ENCODE measurements at regions of chr2 and their contacts with region 1.

Region 1: DNA sequence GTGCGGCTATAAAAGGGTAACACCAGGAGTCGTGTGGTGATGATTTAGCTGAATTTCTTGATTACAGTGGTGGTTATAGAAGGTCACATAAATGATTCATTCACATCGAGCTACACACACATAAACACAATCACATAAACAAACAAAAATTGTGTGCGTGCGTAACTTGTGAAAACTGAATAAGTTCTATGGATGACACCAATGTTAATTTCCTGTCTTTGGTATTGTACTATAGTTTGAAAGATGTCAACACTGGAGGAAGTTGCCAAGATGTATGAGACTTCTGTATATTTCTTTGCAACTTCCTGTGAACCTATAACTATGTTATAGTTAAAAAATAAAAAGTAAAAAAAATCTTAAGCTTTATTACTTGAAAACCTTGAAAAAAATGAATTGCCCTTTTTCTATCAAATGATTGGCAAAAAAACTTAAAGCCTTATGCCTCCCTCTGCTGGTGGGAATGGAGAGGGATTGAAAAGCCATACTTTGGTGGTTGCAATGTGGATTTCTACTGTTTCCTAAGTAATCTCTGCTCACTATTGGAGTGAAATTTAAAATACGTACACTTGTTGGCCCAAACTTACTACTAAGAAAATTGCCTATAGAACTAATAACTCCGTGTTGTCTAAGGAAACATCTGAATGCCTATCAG is 227.7 kb downstream of the RPIA start:
- DNase-seq: peak; percentile 51
- ATAC-seq: peak; percentile 37; the same call in 1 of the 2 replicates
- H3K4me3 ChIP-seq: no peak overlapping the region
- H3K27ac ChIP-seq: no peak overlapping the region
- H3K4me1 ChIP-seq: no peaks in the 10 kb centered on the region
- H3K27me3 ChIP-seq: peaks cover 44% of the 10 kb centered on the region
- CTCF ChIP-seq: peak; percentile 74

Region 2: DNA sequence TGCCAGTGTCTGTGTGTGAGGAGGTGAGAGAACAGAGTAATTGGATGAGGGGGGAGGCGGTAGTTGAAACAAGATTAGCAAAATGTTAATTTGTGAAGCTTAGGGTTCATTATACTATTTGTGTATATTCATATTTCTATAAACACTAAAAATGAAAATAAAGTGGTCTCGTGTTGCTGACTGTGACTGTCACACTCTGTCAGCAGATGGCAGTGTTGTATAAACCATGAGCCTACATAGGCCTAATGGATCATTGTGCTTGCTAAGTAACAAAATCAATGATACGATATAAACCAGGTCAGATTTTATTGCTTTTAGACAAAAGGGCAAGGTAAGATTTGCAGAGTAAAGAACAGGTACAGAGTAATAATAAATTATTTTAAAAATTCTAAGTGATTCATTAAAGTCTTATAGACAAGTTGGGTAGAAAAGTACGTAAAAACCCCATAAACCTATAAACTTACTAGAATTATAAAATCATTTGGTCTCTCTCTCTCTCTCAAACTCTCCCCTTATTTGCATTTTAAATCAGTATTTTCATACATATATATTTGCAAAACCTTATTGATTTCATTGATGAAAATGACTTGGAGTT is 45.1 kb before region 1 on chr2:
- CTCF ChIA-PET with region 1: no interaction called
- POLR2A ChIA-PET with region 1: no interaction called
- intact Hi-C with region 1: loop called (anchors 1 kb)
- DNase-seq: peak; percentile 76
- ATAC-seq: peak; percentile 85
- H3K4me3 ChIP-seq: no peak overlapping the region
- H3K27ac ChIP-seq: no peak overlapping the region
- H3K4me1 ChIP-seq: no peaks in the 10 kb centered on the region
- H3K27me3 ChIP-seq: peaks cover 59% of the 10 kb centered on the region
- CTCF ChIP-seq: peak; percentile 90

Region 3: DNA sequence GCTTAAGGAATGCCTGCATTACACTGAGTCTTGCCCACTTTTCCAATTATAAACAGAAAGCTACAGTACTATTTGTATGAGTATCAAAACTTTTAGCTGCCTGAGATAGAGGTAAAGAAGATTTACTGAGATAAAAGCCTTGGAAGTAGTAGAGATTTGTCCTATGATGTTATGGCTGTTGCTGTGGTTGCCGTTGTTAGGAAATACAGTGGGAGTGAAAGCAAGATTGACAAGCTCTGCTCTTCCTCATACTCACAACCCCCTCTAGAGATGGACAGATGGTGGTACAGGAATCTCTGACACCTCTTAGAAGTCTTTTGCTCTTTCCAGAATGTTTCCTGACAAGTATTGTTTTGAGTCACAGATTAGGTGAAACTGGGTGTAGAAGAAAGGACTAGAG is 14.8 kb after region 1 on chr2:
- CTCF ChIA-PET with region 1: no interaction called
- POLR2A ChIA-PET with region 1: no interaction called
- intact Hi-C with region 1: no loop called
- DNase-seq: peak; percentile 26
- ATAC-seq: no peak
- H3K4me3 ChIP-seq: no peak overlapping the region
- H3K27ac ChIP-seq: no peak overlapping the region
- H3K4me1 ChIP-seq: no peaks in the 10 kb centered on the region
- H3K27me3 ChIP-seq: peaks cover 31% of the 10 kb centered on the region
- CTCF ChIP-seq: peak; percentile 37; the same call in 1 of the 2 replicates

Measured in PC-3 (cell line).